Stomach (tissue), 19 donors: ENCODE measurements at regions of chr22 and their contacts with region 1.

Region 1: GRCh38 chr22:20156611-20157429 is 6.0 kb upstream of the CCDC188 start:
- DNase-seq: peak; percentile 93 to 95
- H3K4me3 ChIP-seq: no peak overlapping the region
- H3K27ac ChIP-seq: no peak overlapping the region
- H3K4me1 ChIP-seq: peaks cover 0 to 5% (median 2%) of the 10 kb centered on the region in 4 donors
- H3K27me3 ChIP-seq: peaks cover 0 to 65% (median 8%) of the 10 kb centered on the region in 3 donors
- CTCF ChIP-seq: peak in 6 of 7 experiments; percentile 98 to 100 (median 100)
- EP300 ChIP-seq: no peak
- POLR2A ChIP-seq: no peak

Region 2: GRCh38 chr22:20079745-20080444 is 76.9 kb before region 1 on chr22 and contains the start of gene DGCR8:
- intact Hi-C with region 1: no loop called
- DNase-seq: peak; percentile 94 to 98
- H3K4me3 ChIP-seq: peak within 1 kb of the TSS; percentile 75 to 92 (median 88)
- H3K27ac ChIP-seq: peak within 1 kb of the TSS; percentile 92 to 97 (median 92)
- H3K4me1 ChIP-seq: peaks cover 40 to 54% (median 49%) of the 10 kb centered on the region in 4 donors
- H3K27me3 ChIP-seq: no peaks in the 10 kb centered on the region
- CTCF ChIP-seq: no peak
- EP300 ChIP-seq: peak; percentile 6
- POLR2A ChIP-seq: peak in 1 of 4 donors; percentile 29
- total RNA-seq, gene DGCR8: 25.1 to 55.4 (median 48.5) TPM

Region 3: GRCh38 chr22:20284471-20285086 is 127.8 kb after region 1 on chr22:
- intact Hi-C with region 1: loop called (anchors 5 kb)
- DNase-seq: no peak
- H3K4me3 ChIP-seq: no peak overlapping the region
- H3K27ac ChIP-seq: no peak overlapping the region
- H3K4me1 ChIP-seq: no peaks in the 10 kb centered on the region
- H3K27me3 ChIP-seq: peaks cover 0 to 27% (median 3%) of the 10 kb centered on the region in 3 donors
- CTCF ChIP-seq: no peak
- EP300 ChIP-seq: no peak
- POLR2A ChIP-seq: no peak